ENCODE measurements at regions of chr15 and their contacts with region 1.

Region 1: DNA sequence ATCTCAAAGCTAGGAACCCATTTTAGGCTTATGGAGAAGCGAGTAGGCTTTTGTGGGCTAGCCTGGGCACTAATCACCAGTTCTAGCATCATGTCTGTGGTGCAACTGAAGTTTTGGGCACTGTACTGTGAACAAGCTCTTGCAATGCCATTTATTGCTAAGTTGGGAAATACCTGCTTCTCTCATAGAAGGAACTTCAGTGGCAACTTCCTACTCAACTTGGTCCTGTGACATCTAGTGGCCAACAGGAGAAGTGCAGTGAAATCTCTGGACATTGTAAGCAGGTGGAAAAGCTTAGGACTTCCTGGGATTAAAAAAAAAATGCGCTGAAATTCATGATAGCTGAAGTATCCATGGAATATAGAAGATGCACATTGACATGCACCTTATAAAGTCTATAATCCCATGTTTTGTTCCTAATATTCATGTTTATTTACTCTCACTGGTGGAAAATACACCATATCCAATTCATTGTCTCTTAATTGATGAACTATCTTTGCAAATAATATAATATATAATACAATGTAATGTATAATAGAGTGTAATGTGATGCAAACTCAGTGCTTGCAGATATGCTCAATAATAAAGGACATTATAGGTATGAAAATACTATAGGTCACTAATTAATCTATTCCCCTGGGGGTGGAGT is 6.5 kb upstream of the ALDH1A3 start:
- DNase-seq: peak; percentile 79 to 85 (median 83)
- ATAC-seq: peak; percentile 91
- H3K4me3 ChIP-seq: no peak overlapping the region
- H3K27ac ChIP-seq: peak overlapping the region in 3 of 4 donors; percentile 31 to 43 (median 41)
- H3K4me1 ChIP-seq: no peaks in the 10 kb centered on the region
- H3K27me3 ChIP-seq: no peaks in the 10 kb centered on the region
- CTCF ChIP-seq: peak; percentile 79 to 97 (median 95)
- POLR2A ChIP-seq: no peak

Region 2: GRCh38 chr15:100635406-100636071 is 237.6 kb before region 1 on chr15:
- intact Hi-C with region 1: loop called (anchors 10 kb)
- DNase-seq: no peak
- ATAC-seq: no peak
- H3K4me3 ChIP-seq: no peak overlapping the region
- H3K27ac ChIP-seq: no peak overlapping the region
- H3K4me1 ChIP-seq: no peaks in the 10 kb centered on the region
- H3K27me3 ChIP-seq: no peaks in the 10 kb centered on the region
- CTCF ChIP-seq: no peak
- POLR2A ChIP-seq: no peak

Region 3: DNA sequence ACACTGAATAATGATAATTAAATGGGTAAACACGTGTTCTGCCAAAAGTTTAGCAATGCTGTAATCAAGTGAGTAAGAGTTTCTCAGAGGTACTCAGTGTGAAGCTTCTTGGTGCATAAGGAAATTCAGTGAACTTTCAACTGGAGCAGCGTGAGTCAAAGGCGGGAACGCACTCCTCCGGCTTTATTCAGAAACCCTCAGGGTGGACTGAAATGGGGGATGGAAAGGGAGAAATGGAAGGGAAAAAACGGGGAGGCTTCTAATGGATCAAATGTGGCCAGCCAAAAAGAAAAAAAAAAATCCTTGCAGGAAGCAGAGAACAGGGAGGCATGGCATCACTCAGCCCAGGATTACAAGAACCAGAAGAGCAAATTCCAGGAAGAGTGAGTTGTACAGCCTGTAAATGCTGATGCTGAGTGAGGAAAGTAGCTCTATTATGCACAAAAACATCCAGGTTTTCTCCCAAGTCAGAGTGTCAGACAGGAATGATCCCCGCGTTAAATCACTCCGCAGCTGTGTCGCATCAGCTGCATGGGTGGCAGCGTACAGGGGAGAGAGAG is 185.5 kb before region 1 on chr15:
- intact Hi-C with region 1: loop called (anchors 10 kb)
- DNase-seq: peak in 1 of 4 donors; percentile 31
- ATAC-seq: peak; percentile 43
- H3K4me3 ChIP-seq: no peak overlapping the region
- H3K27ac ChIP-seq: no peak overlapping the region
- H3K4me1 ChIP-seq: no peaks in the 10 kb centered on the region
- H3K27me3 ChIP-seq: no peaks in the 10 kb centered on the region
- CTCF ChIP-seq: no peak
- POLR2A ChIP-seq: no peak

Region 4: GRCh38 chr15:100713163-100713867 is 159.8 kb before region 1 on chr15:
- intact Hi-C with region 1: loop called (anchors 10 kb)
- DNase-seq: peak; percentile 51 to 76 (median 66)
- ATAC-seq: peak; percentile 78
- H3K4me3 ChIP-seq: no peak overlapping the region
- H3K27ac ChIP-seq: peak overlapping the region; percentile 69 to 86 (median 78)
- H3K4me1 ChIP-seq: peaks cover 62% of the 10 kb centered on the region
- H3K27me3 ChIP-seq: no peaks in the 10 kb centered on the region
- CTCF ChIP-seq: no peak
- POLR2A ChIP-seq: peak in 1 of 3 donors; percentile 23